ENCODE measurements at regions of chr11 and their contacts with region 1.

Region 1: GRCh38 chr11:65625628-65626342 is 10.2 kb downstream of the PCNX3 start:
- DNase-seq: peak; percentile 84
- CTCF ChIP-seq: peak; percentile 71

Region 2: GRCh38 chr11:65615229-65615941 is 10.4 kb before region 1 on chr11 and contains the start of gene PCNX3:
- CTCF ChIA-PET with region 1: interaction called, 24 read pairs
- POLR2A ChIA-PET with region 1: interaction called, 4 read pairs
- DNase-seq: peak; percentile 100
- CTCF ChIP-seq: no peak

Region 3: GRCh38 chr11:65637794-65638317 is 12.1 kb after region 1 on chr11 and contains the start of gene SIPA1:
- CTCF ChIA-PET with region 1: interaction called, 54 read pairs
- POLR2A ChIA-PET with region 1: interaction called, 3 read pairs
- DNase-seq: peak; percentile 90
- CTCF ChIP-seq: peak; percentile 26

Region 4: GRCh38 chr11:65743928-65744698 is 118.3 kb after region 1 on chr11:
- CTCF ChIA-PET with region 1: no interaction called
- POLR2A ChIA-PET with region 1: no interaction called
- DNase-seq: no peak
- CTCF ChIP-seq: no peak

Region 5: GRCh38 chr11:65766535-65766934 is 140.8 kb after region 1 on chr11:
- CTCF ChIA-PET with region 1: interaction called, 16 read pairs
- POLR2A ChIA-PET with region 1: no interaction called
- DNase-seq: no peak
- CTCF ChIP-seq: no peak

Region 6: GRCh38 chr11:65802841-65803240 is 177.1 kb after region 1 on chr11:
- CTCF ChIA-PET with region 1: no interaction called
- POLR2A ChIA-PET with region 1: no interaction called
- DNase-seq: peak; percentile 84
- CTCF ChIP-seq: no peak

Measured in GM10248 (cell line).